Activated CD4-positive, alpha-beta T cell treated with anti-CD3 and anti-CD28 coated beads, Interleukin-2, amount 10 ng/mL, durations not matched to agents 7 days and 5 days (primary cell): ENCODE measurements at regions of chr7 and their contacts with region 1.

Region 1: GRCh38 chr7:121547544-121548092 is 151.5 kb upstream of the FAM3C start:
- DNase-seq: peak; percentile 26
- H3K4me3 Mint-ChIP-seq: no peak overlapping the region
- H3K27ac Mint-ChIP-seq: no peak overlapping the region
- H3K4me1 Mint-ChIP-seq: peaks cover 27% of the 10 kb centered on the region
- H3K27me3 Mint-ChIP-seq: peaks cover 7% of the 10 kb centered on the region

Region 2: GRCh38 chr7:121366852-121367431 is 180.7 kb before region 1 on chr7:
- CTCF ChIA-PET with region 1: interaction called, 37 read pairs
- POLR2A ChIA-PET with region 1: no interaction called
- DNase-seq: peak; percentile 50
- H3K4me3 Mint-ChIP-seq: no peak overlapping the region
- H3K27ac Mint-ChIP-seq: no peak overlapping the region
- H3K4me1 Mint-ChIP-seq: peaks cover 31% of the 10 kb centered on the region
- H3K27me3 Mint-ChIP-seq: no peaks in the 10 kb centered on the region

Region 3: DNA sequence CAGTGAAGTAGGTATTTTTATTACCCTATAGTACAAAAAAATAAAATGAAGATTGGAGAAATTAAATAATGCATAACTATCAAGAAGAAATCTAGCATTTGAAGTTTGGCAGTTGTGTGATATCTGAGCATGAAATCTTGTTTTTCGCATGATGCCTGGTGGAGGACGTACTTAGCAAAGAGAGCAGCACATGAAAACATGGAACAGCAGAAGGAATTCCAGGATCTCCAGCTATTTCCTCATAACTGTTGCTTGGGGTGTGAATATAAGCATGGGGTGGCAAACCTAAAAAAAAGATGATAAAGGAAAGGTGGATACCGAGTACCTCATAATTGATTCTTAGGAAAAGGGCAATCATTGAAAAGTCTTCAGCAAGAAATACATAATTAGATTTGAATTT is 22.7 kb after region 1 on chr7:
- CTCF ChIA-PET with region 1: no interaction called
- POLR2A ChIA-PET with region 1: no interaction called
- DNase-seq: no peak
- H3K4me3 Mint-ChIP-seq: no peak overlapping the region
- H3K27ac Mint-ChIP-seq: no peak overlapping the region
- H3K4me1 Mint-ChIP-seq: no peaks in the 10 kb centered on the region
- H3K27me3 Mint-ChIP-seq: no peaks in the 10 kb centered on the region